Heart left ventricle (tissue), 16 donors: ENCODE measurements at regions of chr7 and their contacts with region 1.

Region 1: DNA sequence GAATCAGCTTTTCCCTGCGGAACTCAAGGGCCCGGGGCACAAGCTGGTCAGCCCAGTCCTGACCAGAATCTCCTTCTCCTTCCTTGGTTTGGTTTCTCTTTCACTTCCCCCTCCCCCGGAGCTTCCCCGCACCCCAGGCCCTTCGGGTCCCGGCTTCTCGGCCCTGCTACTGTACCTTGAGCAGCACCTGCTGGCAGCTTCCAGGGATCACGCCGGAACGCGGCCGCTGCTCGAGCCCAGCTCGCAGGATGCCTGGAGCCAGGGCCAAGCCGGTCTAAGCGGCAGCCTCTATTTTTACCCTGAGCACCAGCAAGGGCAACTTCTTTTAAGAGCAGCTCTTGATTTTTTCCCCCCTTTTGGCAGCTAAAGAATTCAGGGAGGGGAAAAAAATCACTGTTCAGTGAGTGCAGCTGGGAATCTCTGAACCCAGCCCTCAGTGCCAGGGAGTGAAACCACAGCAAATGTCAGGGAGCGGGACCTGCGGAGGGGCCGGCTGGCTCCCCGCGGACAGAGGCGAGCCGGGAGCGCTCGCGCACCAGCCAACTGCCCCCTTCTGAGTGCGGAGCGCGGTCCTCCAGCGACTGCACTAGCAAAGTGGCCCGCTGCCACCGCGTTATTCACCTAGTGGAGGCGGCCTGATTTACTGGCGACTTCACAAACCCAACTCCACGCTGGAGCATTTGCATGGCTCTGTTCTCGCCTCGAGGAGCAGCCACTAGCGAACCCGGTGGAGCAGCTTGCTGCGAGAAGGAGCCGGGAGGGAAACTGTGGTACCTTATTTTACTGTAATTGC is 2.4 kb upstream of the INHBA start:
- DNase-seq: peak; percentile 86 to 91 (median 88)
- ATAC-seq: peak; percentile 85 to 96 (median 94)
- H3K4me3 ChIP-seq: peak overlapping the region; percentile 18 to 67 (median 55)
- H3K27ac ChIP-seq: peak overlapping the region in 11 of 12 donors; percentile 65 to 87 (median 81)
- H3K4me1 ChIP-seq: peaks cover 0 to 25% (median 8%) of the 10 kb centered on the region in 12 donors
- H3K27me3 ChIP-seq: peaks cover 0 to 2% (median 0%) of the 10 kb centered on the region in 9 donors
- CTCF ChIP-seq: peak; percentile 44 to 75 (median 60)
- POLR2A ChIP-seq: no peak

Region 2: GRCh38 chr7:40232242-40232893 is 1472.9 kb before region 1 on chr7:
- intact Hi-C with region 1: loop called in 2 of 10 experiments (anchors 10 kb)
- DNase-seq: no peak
- ATAC-seq: no peak
- H3K4me3 ChIP-seq: no peak overlapping the region
- H3K27ac ChIP-seq: no peak overlapping the region
- H3K4me1 ChIP-seq: peaks cover 0 to 4% (median 0%) of the 10 kb centered on the region in 12 donors
- H3K27me3 ChIP-seq: no peaks in the 10 kb centered on the region
- CTCF ChIP-seq: peak; percentile 8 to 65 (median 46)
- POLR2A ChIP-seq: no peak

Region 3: GRCh38 chr7:40329601-40330153 is 1375.6 kb before region 1 on chr7:
- intact Hi-C with region 1: loop called in 9 of 10 experiments (anchors 5 to 10 kb)
- DNase-seq: no peak
- ATAC-seq: peak in 2 of 4 donors; percentile 49 to 50
- H3K4me3 ChIP-seq: no peak overlapping the region
- H3K27ac ChIP-seq: no peak overlapping the region
- H3K4me1 ChIP-seq: peaks cover 0 to 4% (median 0%) of the 10 kb centered on the region in 12 donors
- H3K27me3 ChIP-seq: no peaks in the 10 kb centered on the region
- CTCF ChIP-seq: peak; percentile 64 to 89 (median 73)
- POLR2A ChIP-seq: no peak

Region 4: GRCh38 chr7:40604601-40605438 is 1100.5 kb before region 1 on chr7:
- intact Hi-C with region 1: loop called in 1 of 10 experiments (anchors 10 kb)
- DNase-seq: peak; percentile 19 to 75 (median 54)
- ATAC-seq: peak; percentile 58 to 88 (median 86)
- H3K4me3 ChIP-seq: no peak overlapping the region
- H3K27ac ChIP-seq: no peak overlapping the region
- H3K4me1 ChIP-seq: peaks cover 0 to 6% (median 0%) of the 10 kb centered on the region in 12 donors
- H3K27me3 ChIP-seq: no peaks in the 10 kb centered on the region
- CTCF ChIP-seq: peak; percentile 40 to 71 (median 57)
- POLR2A ChIP-seq: no peak

Region 5: GRCh38 chr7:41003031-41003925 is 702.0 kb before region 1 on chr7:
- intact Hi-C with region 1: loop called in 9 of 10 experiments (anchors 5 to 10 kb)
- DNase-seq: peak in 1 of 5 donors; percentile 28
- ATAC-seq: no peak
- H3K4me3 ChIP-seq: no peak overlapping the region
- H3K27ac ChIP-seq: no peak overlapping the region
- H3K4me1 ChIP-seq: peaks cover 0 to 28% (median 0%) of the 10 kb centered on the region in 12 donors
- H3K27me3 ChIP-seq: no peaks in the 10 kb centered on the region
- CTCF ChIP-seq: peak; percentile 50 to 73 (median 66)
- POLR2A ChIP-seq: no peak

Region 6: DNA sequence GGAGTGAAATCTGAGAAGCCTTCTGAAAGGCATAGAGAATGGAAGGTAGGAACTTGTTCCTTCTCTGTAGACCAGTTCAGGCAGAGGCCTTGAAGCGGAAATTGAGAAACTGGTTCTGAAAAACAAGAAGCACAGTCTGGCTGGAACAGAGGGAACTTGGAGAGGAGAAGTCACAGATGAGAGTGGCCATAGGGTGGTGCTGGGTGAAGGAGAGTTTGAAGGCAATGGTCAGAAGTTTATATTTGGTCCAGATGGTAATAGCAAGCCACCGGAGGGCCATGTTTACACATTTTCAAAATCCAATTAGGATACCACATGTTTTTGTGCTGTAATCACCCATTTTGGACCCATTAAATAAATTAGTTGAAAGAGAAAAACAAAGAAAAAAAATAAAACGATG is 694.9 kb before region 1 on chr7:
- intact Hi-C with region 1: loop called in 6 of 10 experiments (anchors 10 kb)
- DNase-seq: peak in 2 of 5 donors; percentile 7 to 26
- ATAC-seq: peak; percentile 68 to 87 (median 72)
- H3K4me3 ChIP-seq: no peak overlapping the region
- H3K27ac ChIP-seq: peak overlapping the region in 7 of 12 donors; percentile 24 to 67 (median 56)
- H3K4me1 ChIP-seq: peaks cover 0 to 34% (median 1%) of the 10 kb centered on the region in 12 donors
- H3K27me3 ChIP-seq: no peaks in the 10 kb centered on the region
- CTCF ChIP-seq: peak in 1 of 12 donors; percentile 14
- POLR2A ChIP-seq: no peak

Region 7: DNA sequence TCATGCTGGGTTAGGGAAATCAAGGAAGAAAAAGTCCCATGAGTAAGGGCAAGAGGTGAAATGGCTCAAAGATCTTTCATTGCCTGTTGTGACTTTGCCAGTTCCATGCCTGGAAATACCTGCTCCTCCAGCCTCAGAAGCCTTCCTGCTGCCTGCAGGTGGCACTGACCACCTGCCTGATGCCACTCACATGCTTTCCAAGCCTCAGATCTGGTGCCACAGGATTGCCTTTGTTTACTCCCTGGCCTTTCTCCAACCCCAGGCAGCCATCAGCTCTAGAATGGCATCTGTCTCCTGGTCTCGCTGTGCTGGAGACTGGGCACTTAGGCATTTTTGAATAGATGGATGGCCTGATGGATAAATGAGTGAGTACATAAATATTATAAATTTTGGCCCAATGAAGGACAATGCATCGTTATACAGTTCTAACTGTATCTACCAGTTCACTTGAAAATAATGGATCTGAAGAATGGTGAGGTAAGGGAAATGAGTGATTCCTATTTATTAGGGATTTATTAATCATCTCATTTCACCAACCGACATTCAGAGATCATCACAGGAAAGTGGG is 659.7 kb before region 1 on chr7:
- intact Hi-C with region 1: loop called in 1 of 10 experiments (anchors 2 kb)
- DNase-seq: no peak
- ATAC-seq: no peak
- H3K4me3 ChIP-seq: no peak overlapping the region
- H3K27ac ChIP-seq: peak overlapping the region in 7 of 12 donors; percentile 33 to 80 (median 65)
- H3K4me1 ChIP-seq: peaks cover 0 to 33% (median 19%) of the 10 kb centered on the region in 12 donors
- H3K27me3 ChIP-seq: no peaks in the 10 kb centered on the region
- CTCF ChIP-seq: peak in 1 of 12 donors; percentile 5
- POLR2A ChIP-seq: no peak

Region 8: DNA sequence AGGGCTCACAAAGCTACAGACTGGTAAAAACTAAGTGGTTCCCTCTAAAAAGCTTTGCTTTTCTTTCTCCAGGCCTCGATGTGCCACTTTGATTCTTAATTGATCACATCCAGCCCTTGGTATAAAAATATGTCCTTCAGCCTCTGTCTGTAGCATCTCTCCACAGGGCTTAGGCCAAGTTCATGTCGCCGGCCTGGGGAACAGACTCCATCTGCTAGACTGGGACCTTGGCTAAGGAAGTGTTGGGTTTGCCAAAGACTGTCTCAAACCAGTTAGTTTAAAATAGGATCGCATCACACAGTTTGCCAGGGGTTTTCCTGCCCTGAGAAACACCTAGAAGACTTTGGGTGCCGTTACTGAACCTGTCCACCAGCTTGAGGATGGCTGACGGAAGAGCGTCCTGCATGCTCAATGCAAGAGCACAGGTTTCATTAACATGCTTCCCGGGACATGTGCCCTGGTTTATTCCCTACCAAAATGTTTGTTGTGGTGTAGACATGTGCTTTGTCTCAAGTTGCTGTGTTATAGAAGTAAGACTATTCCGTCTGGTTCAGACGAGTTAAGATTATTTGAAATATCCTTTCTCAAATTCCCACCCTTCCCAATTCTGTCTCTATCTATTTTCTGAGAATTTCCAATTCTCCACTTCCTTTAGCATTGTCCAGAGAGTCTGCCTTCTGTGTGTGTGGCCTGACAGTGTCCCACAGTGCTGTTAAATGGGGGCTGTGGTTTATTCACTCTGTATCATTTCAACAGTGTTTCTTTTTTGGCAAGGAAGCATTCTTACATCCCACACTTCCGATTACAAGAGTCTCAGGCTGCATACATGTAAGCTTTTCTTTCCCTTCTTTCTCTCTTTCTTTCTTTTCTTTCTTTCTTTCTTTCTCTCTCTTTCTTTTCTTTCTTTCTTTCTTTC is 337.1 kb before region 1 on chr7:
- intact Hi-C with region 1: no loop called
- DNase-seq: peak in 3 of 5 donors; percentile 27 to 51 (median 42)
- ATAC-seq: peak; percentile 55 to 90 (median 78)
- H3K4me3 ChIP-seq: no peak overlapping the region
- H3K27ac ChIP-seq: peak overlapping the region in 5 of 12 donors; percentile 23 to 70 (median 57)
- H3K4me1 ChIP-seq: peaks cover 0 to 7% (median 0%) of the 10 kb centered on the region in 12 donors
- H3K27me3 ChIP-seq: no peaks in the 10 kb centered on the region
- CTCF ChIP-seq: no peak
- POLR2A ChIP-seq: no peak

Region 9: DNA sequence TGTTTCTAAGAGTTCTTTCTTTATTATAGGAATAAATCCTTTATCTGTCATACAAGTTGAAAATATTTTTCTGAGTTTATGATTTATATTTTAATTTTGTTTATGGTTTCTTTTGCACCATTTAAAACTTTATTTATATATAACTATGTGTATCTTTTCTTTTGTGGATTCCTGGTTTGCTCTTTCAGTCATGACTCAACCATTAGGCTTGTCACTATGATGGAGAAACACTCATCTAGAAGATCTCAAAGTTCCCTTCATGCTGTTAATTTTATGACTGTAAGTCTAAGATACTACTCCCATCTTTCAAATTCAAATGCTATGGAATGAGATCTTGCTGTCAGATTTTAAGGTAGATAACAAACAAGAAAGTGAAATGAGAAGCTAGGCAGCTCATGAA is 201.9 kb before region 1 on chr7:
- intact Hi-C with region 1: no loop called
- DNase-seq: no peak
- ATAC-seq: no peak
- H3K4me3 ChIP-seq: no peak overlapping the region
- H3K27ac ChIP-seq: no peak overlapping the region
- H3K4me1 ChIP-seq: no peaks in the 10 kb centered on the region
- H3K27me3 ChIP-seq: no peaks in the 10 kb centered on the region
- CTCF ChIP-seq: no peak
- POLR2A ChIP-seq: no peak